GM12878 (cell line): ENCODE measurements at regions of chr20 and their contacts with region 1.

Region 1: DNA sequence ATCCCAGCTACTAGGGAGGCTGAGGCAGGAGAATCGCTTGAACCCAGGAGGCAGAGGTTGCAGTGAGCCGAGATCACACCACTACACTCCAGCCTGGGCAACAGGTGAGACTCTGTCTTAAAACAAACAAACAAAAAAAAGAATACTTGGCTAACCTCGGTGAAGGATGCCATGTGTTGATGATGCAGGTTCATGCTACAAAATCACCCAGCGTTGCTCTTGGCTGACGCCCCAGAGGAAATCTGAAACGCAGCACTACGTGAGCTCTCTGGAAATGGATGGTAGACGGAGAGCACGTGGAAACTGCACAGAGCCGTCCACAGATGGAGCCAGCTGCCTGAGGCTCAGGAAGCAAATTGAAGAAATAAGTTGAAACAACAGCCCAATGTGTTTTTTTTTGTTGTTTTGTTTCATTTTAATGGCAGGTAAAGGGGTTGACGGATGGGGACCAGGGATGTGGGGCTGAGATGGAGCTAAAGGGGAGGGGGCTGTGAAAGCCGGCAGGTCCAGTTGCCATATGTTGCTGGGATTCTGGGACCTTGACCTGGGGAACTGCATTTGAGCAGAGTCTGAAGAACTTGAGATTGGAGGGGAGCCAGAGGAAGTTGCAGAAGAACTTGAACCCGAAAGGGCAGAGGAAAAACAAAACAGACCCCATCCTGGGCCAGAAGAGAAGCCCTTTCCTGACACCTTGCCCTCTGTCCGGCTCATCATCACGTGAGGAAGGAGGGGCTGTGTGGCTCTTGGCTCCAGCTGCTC is 12.8 kb upstream of the MANBAL start:
- DNase-seq: no peak
- ATAC-seq: peak; percentile 94
- H3K4me3 ChIP-seq: no peak overlapping the region
- H3K27ac ChIP-seq: peak overlapping the region; percentile 78
- H3K4me1 ChIP-seq: peaks cover 42% of the 10 kb centered on the region
- H3K27me3 ChIP-seq: no peaks in the 10 kb centered on the region
- CTCF ChIP-seq: peak; percentile 30 to 69 (median 51); a peak in 4 of 6 replicates
- EP300 ChIP-seq: peak; percentile 27 to 40; a peak in 1 of 4 replicates
- POLR2A ChIP-seq: 0 out of 2 replicates have a peak, but pooled peaks have one; percentile 36
- RAD21 ChIP-seq: peak; percentile 75

Region 2: DNA sequence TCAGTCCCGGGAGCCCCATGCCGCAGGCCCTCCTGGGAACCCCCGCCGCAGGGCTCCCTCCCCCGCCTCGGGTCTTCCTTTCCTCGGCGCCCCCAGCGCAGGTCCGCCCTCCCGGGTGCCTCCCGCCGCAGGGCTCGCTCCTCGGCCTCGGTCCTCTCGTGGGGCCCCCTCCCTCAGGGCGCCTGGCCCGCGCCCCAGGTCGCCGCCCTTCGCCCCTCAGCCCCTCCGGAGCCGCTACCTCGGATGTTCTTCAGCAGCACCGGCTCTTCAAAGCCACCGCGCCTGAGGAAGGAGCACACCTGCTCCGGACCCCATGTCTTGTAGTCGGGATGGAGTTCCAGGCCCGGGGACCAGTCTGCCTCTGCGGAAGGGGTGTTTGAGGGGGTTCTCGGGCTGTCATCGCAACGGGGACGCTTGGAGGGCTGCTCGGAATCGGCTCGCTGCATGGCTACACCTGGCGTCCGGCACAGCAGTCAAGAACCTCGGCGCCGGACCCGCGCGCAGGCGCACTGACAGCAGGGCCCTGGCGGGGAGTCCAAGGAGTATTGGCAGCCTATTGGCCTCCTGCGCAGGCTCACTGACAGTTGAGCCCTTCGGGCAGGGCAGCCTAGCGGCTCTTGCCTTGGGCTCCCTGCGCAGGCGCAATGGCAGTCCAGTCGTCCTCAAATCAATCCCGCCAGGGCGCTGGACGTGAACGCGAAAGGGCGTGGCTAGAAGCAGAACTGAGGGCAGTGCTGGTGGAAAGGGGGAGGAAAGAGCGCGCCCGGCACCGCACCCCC is 325.3 kb before region 1 on chr20 and contains the start of gene SAMHD1:
- CTCF ChIA-PET with region 1: no interaction called
- POLR2A ChIA-PET with region 1: no interaction called
- RAD21 ChIA-PET with region 1: no interaction called
- SMC1A ChIA-PET with region 1: no interaction called
- in situ Hi-C with region 1: no loop called
- intact Hi-C with region 1: no loop called
- DNase-seq: peak; percentile 96
- ATAC-seq: peak; percentile 96
- H3K4me3 ChIP-seq: peak within 1 kb of the TSS; percentile 96
- H3K27ac ChIP-seq: peak within 1 kb of the TSS; percentile 78
- H3K4me1 ChIP-seq: peaks cover 5% of the 10 kb centered on the region
- H3K27me3 ChIP-seq: no peaks in the 10 kb centered on the region
- CTCF ChIP-seq: no peak
- EP300 ChIP-seq: no peak
- POLR2A ChIP-seq: peak; percentile 75
- RAD21 ChIP-seq: no peak
- polyA plus RNA-seq, gene SAMHD1: 20.5 to 21.7 TPM

Region 3: GRCh38 chr20:37265152-37265551 is 11.5 kb before region 1 on chr20:
- CTCF ChIA-PET with region 1: interaction called, 10 read pairs
- POLR2A ChIA-PET with region 1: no interaction called
- RAD21 ChIA-PET with region 1: interaction called, 5 read pairs
- SMC1A ChIA-PET with region 1: interaction called, 12 read pairs
- in situ Hi-C with region 1: no loop called
- intact Hi-C with region 1: no loop called
- DNase-seq: no peak
- ATAC-seq: peak; percentile 87
- H3K4me3 ChIP-seq: no peak overlapping the region
- H3K27ac ChIP-seq: no peak overlapping the region
- H3K4me1 ChIP-seq: peaks cover 14% of the 10 kb centered on the region
- H3K27me3 ChIP-seq: no peaks in the 10 kb centered on the region; a peak in 1 of 4 replicates
- CTCF ChIP-seq: no peak
- EP300 ChIP-seq: 0 out of 4 replicates have a peak, but pooled peaks of 1 of the 2 experiments have one; percentile 51
- POLR2A ChIP-seq: no peak
- RAD21 ChIP-seq: no peak

Region 4: DNA sequence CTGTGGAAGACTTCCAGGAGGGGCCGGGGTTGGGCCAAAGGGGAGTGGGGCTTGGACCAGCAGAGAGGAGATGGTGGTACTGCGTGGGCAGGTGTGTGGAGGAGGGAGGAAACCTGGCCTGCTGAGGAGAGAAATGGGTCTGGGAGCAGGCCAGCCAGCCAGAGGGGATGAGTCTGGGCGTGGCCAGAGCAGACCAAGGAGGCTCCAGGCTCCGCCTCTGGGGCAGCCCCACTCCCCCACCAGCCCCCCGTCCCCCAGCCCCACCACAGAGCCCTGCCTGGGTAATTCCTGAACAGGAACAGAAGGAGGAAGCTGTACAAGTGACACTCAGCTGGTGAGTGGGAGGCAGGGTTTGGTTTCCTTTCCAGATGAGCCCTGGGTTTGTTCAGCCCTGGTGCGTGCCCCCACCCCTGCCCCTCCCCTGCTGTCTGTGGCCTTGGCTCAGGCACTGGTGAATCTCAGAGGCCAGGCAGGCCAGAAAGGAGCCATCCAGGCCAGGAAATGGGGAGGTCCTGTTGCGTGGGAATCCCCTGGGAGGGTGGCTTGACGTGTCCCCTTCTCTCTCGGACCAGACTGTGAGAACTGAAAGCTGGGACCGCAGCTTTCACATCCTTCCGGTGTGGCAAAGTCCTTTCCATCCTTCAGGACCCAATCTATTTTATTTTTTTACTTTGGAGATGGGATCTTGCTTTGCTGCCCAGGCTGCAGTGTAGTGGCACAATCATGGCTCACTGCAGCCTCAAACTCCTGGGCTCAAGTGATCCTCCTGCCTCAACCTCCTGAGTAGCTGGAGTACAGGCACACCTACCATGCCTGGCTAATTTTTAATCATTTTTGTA is 59.9 kb after region 1 on chr20:
- CTCF ChIA-PET with region 1: interaction called, 4 read pairs
- POLR2A ChIA-PET with region 1: interaction called, 3 read pairs
- RAD21 ChIA-PET with region 1: interaction called, 15 read pairs
- SMC1A ChIA-PET with region 1: interaction called, 11 read pairs
- in situ Hi-C with region 1: no loop called
- intact Hi-C with region 1: no loop called
- DNase-seq: peak; percentile 94
- ATAC-seq: peak; percentile 88
- H3K4me3 ChIP-seq: peak overlapping the region; percentile 58; the same call in 1 of the 2 replicates
- H3K27ac ChIP-seq: peak overlapping the region; percentile 87
- H3K4me1 ChIP-seq: peaks cover 38% of the 10 kb centered on the region
- H3K27me3 ChIP-seq: no peaks in the 10 kb centered on the region
- CTCF ChIP-seq: no peak
- EP300 ChIP-seq: peak; percentile 66 to 81; a peak in 3 of 4 replicates
- POLR2A ChIP-seq: peak; percentile 41; the same call in 1 of the 2 replicates
- RAD21 ChIP-seq: no peak

Region 5: GRCh38 chr20:37365760-37366638 is 89.3 kb after region 1 on chr20:
- CTCF ChIA-PET with region 1: interaction called, 14 read pairs
- POLR2A ChIA-PET with region 1: no interaction called
- RAD21 ChIA-PET with region 1: interaction called, 3 read pairs
- SMC1A ChIA-PET with region 1: interaction called, 8 read pairs
- in situ Hi-C with region 1: no loop called
- intact Hi-C with region 1: loop called (anchors 1 kb)
- DNase-seq: peak; percentile 90
- ATAC-seq: peak; percentile 86
- H3K4me3 ChIP-seq: peak overlapping the region; percentile 2; the same call in 1 of the 2 replicates
- H3K27ac ChIP-seq: peak overlapping the region; percentile 87
- H3K4me1 ChIP-seq: peaks cover 74% of the 10 kb centered on the region
- H3K27me3 ChIP-seq: no peaks in the 10 kb centered on the region
- CTCF ChIP-seq: peak in 1 of 3 experiments; percentile 2; a peak in 1 of 6 replicates
- EP300 ChIP-seq: peak; percentile 77 to 79; a peak in 3 of 4 replicates
- POLR2A ChIP-seq: no peak
- RAD21 ChIP-seq: peak; percentile 57

Region 6: GRCh38 chr20:37534401-37535157 is 257.9 kb after region 1 on chr20:
- CTCF ChIA-PET with region 1: interaction called, 282 read pairs
- POLR2A ChIA-PET with region 1: interaction called, 5 read pairs
- RAD21 ChIA-PET with region 1: interaction called, 119 read pairs
- SMC1A ChIA-PET with region 1: interaction called, 129 read pairs
- in situ Hi-C with region 1: loop called (anchors 5 kb)
- intact Hi-C with region 1: no loop called
- DNase-seq: peak; percentile 90
- ATAC-seq: peak; percentile 98
- H3K4me3 ChIP-seq: no peak overlapping the region
- H3K27ac ChIP-seq: peak overlapping the region; percentile 57
- H3K4me1 ChIP-seq: peaks cover 18% of the 10 kb centered on the region
- H3K27me3 ChIP-seq: no peaks in the 10 kb centered on the region
- CTCF ChIP-seq: peak; percentile 69 to 88 (median 77)
- EP300 ChIP-seq: peak; percentile 47 to 59; a peak in 2 of 4 replicates
- POLR2A ChIP-seq: no peak
- RAD21 ChIP-seq: peak; percentile 97